ENCODE measurements at regions of chr17 and their contacts with region 1.

Region 1: GRCh38 chr17:14308965-14309879 is 8.3 kb downstream of the HS3ST3B1 start:
- DNase-seq: no peak
- H3K4me3 ChIP-seq: peak overlapping the region; percentile 50 to 62 (median 54)
- H3K27ac ChIP-seq: peak overlapping the region; percentile 1 to 59 (median 30)
- H3K4me1 ChIP-seq: peaks cover 19 to 26% (median 22%) of the 10 kb centered on the region in 4 donors
- H3K27me3 ChIP-seq: peaks cover 0 to 72% (median 26%) of the 10 kb centered on the region in 4 donors
- CTCF ChIP-seq: no peak
- EP300 ChIP-seq: no peak
- POLR2A ChIP-seq: no peak

Region 2: GRCh38 chr17:13337864-13338371 is 971.3 kb before region 1 on chr17:
- intact Hi-C with region 1: loop called (anchors 5 kb)
- DNase-seq: no peak
- H3K4me3 ChIP-seq: peak overlapping the region; percentile 27 to 45 (median 31)
- H3K27ac ChIP-seq: no peak overlapping the region
- H3K4me1 ChIP-seq: peaks cover 0 to 6% (median 2%) of the 10 kb centered on the region in 4 donors
- H3K27me3 ChIP-seq: peaks cover 0 to 28% (median 0%) of the 10 kb centered on the region in 4 donors
- CTCF ChIP-seq: peak; percentile 55 to 77 (median 65)
- EP300 ChIP-seq: no peak
- POLR2A ChIP-seq: no peak

Measured in esophagus muscularis mucosa (tissue), 4 donors.